BJ (cell line): ENCODE measurements at regions of chr4 and their contacts with region 1.

Region 1: DNA sequence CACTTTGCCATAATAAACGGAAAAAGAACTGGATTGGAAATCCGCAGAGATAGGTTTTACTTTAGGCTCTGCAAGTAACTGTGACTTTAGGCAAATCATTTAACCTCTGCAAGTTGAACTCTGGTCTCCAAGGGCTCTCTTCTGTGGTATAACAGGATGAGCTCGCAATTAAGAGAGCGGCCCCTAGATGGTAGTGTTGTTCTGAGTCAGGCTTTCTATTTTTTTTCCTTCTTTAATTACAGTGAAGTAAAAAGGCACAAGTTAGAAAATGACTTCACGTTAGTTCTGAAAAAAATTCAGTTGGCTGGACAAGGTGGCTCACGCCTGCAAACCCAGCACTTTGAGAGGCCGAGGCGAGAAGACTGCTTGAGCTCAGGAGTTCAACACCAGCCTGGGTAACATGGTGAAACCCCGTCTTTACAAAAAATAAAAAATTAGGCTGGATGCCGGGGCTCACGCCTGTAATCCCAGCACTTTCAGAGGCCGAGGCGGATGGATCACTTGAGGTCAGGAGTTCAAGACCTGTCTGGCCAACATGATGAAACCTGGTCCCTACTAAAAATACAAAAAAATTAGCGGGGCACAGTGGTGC is 18.0 kb downstream of the RPS3A start:
- DNase-seq: no peak
- H3K4me3 ChIP-seq: no peak overlapping the region
- H3K27me3 ChIP-seq: no peaks in the 10 kb centered on the region
- CTCF ChIP-seq: peak; percentile 79

Region 2: GRCh38 chr4:151129801-151130200 is 12.3 kb after region 1 on chr4:
- CTCF ChIA-PET with region 1: interaction called, 11 read pairs
- POLR2A ChIA-PET with region 1: no interaction called
- DNase-seq: no peak
- H3K4me3 ChIP-seq: no peak overlapping the region
- H3K27me3 ChIP-seq: no peaks in the 10 kb centered on the region
- CTCF ChIP-seq: no peak

Region 3: GRCh38 chr4:151276787-151277562 is 159.5 kb after region 1 on chr4 and contains the start of gene PRSS48:
- CTCF ChIA-PET with region 1: interaction called, 14 read pairs
- POLR2A ChIA-PET with region 1: no interaction called
- DNase-seq: no peak
- H3K4me3 ChIP-seq: no peak within 1 kb of the TSS
- H3K27me3 ChIP-seq: no peaks in the 10 kb centered on the region
- CTCF ChIP-seq: peak; percentile 88
- polyA plus RNA-seq, gene PRSS48: not detected in 2 replicates

Region 4: GRCh38 chr4:151362404-151363164 is 245.1 kb after region 1 on chr4:
- CTCF ChIA-PET with region 1: interaction called, 22 read pairs
- POLR2A ChIA-PET with region 1: interaction called, 8 read pairs
- DNase-seq: peak; percentile 9
- H3K4me3 ChIP-seq: no peak overlapping the region
- H3K27me3 ChIP-seq: 0 out of 2 replicates have a peak, but pooled peaks cover 1% of the 10 kb centered on the region
- CTCF ChIP-seq: peak; percentile 98